Activated naive CD4-positive, alpha-beta T cell treated with anti-CD3 and anti-CD28 coated beads, Interleukin-2, amount 10 ng/mL, durations not matched to agents 7 days and 5 days (primary cell): ENCODE measurements at regions of chr3 and their contacts with region 1.

Region 1: DNA sequence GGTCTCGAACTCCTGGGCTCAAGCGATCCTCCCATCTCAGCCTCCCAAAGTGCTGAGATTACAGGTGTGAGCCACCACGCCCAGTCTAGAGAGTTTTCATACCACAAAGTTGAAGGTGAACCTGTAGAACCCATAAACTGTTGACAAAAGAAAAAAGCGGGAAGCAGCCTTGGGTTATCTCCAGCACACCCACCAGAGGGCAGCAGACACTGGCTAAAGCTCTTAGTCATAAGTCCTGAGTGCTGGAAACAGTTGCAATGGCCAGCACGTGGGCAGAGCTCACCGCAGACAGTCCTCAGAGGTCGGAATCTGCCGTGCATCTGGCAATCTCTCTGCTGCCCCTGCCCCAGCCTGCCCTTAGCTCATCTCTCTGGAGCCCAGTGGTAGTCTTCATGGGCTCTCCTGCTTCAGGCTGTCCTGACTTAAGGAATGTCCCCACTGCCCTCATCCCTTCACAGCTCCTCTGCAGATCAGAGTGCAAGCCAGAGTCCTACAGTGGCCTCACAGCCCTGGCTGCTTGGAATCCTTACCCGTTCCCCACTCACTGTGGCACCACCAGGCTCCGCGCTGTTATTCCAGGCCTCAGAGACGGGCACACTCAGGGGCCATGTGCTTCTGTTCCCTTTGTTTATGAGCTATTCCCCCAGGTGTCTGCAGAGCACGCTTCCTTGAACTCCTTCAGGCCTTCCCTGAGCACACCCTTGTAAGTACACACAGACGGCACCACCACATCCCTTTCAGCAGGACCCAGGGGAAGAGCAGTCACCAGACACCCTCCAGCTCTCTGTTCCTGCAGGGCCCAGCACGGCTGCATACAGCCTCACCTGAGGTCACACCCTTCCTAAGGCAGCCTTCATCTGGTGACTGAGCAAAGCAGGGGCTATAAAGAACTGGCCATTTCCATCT is 8.8 kb upstream of the ELP6 start:
- DNase-seq: peak; percentile 87
- H3K4me3 Mint-ChIP-seq: no peak overlapping the region
- H3K27ac Mint-ChIP-seq: no peak overlapping the region
- H3K4me1 Mint-ChIP-seq: peaks cover 11% of the 10 kb centered on the region
- H3K27me3 Mint-ChIP-seq: peaks cover 26% of the 10 kb centered on the region

Region 2: GRCh38 chr3:46998121-46998851 is 524.0 kb before region 1 on chr3:
- CTCF ChIA-PET with region 1: no interaction called
- DNase-seq: peak; percentile 81
- H3K4me3 Mint-ChIP-seq: no peak overlapping the region
- H3K27ac Mint-ChIP-seq: no peak overlapping the region
- H3K4me1 Mint-ChIP-seq: peaks cover 9% of the 10 kb centered on the region
- H3K27me3 Mint-ChIP-seq: no peaks in the 10 kb centered on the region

Region 3: DNA sequence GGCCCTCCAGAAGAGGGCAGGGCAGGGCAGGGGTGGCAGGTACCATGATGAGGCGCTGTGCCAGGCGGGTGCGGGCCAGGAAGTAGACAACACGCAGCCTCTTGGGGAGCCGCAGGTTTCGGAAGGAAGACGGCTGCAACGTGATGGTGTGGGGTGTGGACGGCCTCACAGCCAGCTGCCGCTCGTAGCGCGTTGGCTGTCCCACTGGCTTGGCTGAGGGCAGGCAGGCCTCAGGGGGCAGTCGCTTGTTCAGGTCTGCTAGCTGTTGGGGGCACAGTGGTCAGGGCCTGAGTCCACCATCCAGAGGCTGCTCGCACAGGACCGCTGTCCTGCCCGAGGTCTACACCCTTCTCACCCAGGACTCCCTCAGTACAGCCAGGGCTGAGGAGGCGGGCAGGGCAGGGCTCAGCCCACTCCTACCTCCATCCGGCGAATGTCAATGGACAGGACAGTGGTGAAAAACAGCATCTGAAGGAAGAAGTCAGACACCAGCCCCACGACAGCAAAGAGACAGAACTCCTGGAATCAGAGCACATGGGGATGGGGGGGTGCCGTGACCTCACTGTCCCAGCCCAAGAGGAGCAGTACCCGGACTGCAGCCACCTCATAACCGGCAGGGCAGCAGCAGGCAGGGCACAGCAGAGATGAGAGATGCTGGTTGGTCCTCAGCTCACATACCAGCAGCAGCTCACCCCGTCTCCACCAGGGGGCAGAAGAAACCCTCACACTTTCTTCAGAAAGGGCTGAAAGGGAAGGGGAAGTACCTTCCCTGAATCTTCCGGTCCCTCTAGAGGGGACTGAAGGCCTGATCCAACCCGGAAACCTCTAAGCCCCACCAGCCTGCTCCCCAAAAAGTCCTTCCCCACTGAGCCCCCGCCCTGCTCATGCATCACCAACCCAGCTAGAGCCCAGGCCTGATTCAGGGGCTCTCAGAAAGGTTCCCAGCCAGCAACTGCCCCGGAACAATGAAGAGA is 101.5 kb before region 1 on chr3:
- CTCF ChIA-PET with region 1: interaction called, 10 read pairs
- DNase-seq: peak; percentile 95
- H3K4me3 Mint-ChIP-seq: peak overlapping the region; percentile 60
- H3K27ac Mint-ChIP-seq: peak overlapping the region; percentile 98
- H3K4me1 Mint-ChIP-seq: peaks cover 8% of the 10 kb centered on the region
- H3K27me3 Mint-ChIP-seq: no peaks in the 10 kb centered on the region

Region 4: GRCh38 chr3:47533481-47533880 is 11.1 kb after region 1 on chr3:
- CTCF ChIA-PET with region 1: interaction called, 17 read pairs
- DNase-seq: no peak
- H3K4me3 Mint-ChIP-seq: no peak overlapping the region
- H3K27ac Mint-ChIP-seq: no peak overlapping the region
- H3K4me1 Mint-ChIP-seq: no peaks in the 10 kb centered on the region
- H3K27me3 Mint-ChIP-seq: peaks cover 16% of the 10 kb centered on the region

Region 5: DNA sequence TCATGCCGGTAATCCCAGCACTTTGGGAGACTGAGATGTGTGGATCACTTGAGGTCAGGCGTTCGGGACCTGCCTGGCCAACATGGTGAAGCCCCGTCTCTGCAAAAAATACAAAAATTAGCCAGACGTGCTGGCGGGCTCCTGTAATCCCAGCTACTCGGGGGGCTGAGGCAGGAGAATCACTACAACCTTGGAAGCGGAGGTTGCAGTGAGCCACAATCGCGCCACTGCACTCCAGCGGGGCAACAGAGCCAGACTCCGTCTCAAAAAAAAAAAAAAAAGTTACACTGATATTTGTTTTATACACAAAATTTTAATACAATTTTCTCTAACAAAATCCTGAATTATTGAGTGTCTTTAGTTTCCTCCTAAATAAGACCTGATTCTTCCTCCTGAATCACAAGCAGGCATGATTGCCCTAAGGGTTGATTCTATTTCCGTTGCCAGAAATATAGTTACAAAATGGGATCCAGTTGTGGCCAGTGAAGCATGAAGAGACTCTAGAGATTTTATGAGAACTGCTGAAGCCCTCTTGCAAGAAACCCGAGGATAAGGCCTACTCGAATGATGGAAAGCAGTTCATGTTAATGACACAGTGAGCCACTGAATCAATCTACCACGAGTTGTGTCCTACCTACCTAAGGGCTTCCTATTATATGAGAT is 269.0 kb after region 1 on chr3:
- CTCF ChIA-PET with region 1: interaction called, 31 read pairs
- DNase-seq: no peak
- H3K4me3 Mint-ChIP-seq: no peak overlapping the region
- H3K27ac Mint-ChIP-seq: peak overlapping the region; percentile 21
- H3K4me1 Mint-ChIP-seq: peaks cover 3% of the 10 kb centered on the region
- H3K27me3 Mint-ChIP-seq: peaks cover 9% of the 10 kb centered on the region